Activated CD4-positive, alpha-beta T cell treated with anti-CD3 and anti-CD28 coated beads, Interleukin-2, amount 10 ng/mL, durations not matched to agents 7 days and 5 days (primary cell): ENCODE measurements at regions of chr9 and their contacts with region 1.

Region 1: GRCh38 chr9:130010151-130010988 is 32.6 kb downstream of the FNBP1 start:
- DNase-seq: no peak
- H3K4me3 Mint-ChIP-seq: no peak overlapping the region
- H3K27ac Mint-ChIP-seq: peak overlapping the region; percentile 57
- H3K4me1 Mint-ChIP-seq: peaks cover 76% of the 10 kb centered on the region
- H3K27me3 Mint-ChIP-seq: no peaks in the 10 kb centered on the region

Region 2: DNA sequence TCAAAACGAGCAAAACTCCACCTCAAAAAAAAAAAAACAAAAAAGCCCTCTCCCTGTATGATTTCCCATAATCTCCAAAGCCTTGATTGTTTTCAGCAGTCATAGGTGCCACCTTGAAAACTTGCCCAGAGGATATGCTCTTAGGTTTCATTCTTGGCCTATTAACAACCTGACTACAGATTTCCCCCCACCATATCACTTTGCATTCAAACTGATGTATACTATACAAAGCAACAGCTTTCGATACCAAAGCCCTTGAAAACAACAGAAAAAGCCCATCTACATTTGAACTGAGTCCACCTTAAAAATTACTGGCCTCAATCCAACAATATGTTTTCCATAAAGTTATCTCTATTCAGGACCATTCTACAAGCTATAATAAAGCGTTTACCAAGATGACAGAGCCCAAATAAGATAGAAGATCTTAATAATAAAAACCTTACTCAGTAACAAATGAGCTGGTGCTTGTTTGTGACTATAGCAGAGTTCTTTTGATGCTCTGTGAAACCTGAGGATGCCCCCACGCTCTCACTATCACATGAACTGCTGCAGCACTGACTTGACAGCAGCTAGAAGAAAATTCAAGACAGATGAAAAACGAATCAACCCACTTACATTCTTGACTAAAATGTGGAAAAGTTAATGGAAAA is 11.8 kb before region 1 on chr9:
- CTCF ChIA-PET with region 1: interaction called, 11 read pairs
- POLR2A ChIA-PET with region 1: no interaction called
- DNase-seq: no peak
- H3K4me3 Mint-ChIP-seq: no peak overlapping the region
- H3K27ac Mint-ChIP-seq: peak overlapping the region; percentile 50
- H3K4me1 Mint-ChIP-seq: peaks cover 78% of the 10 kb centered on the region
- H3K27me3 Mint-ChIP-seq: no peaks in the 10 kb centered on the region